ENCODE measurements at regions of chr17 and their contacts with region 1.

Region 1: DNA sequence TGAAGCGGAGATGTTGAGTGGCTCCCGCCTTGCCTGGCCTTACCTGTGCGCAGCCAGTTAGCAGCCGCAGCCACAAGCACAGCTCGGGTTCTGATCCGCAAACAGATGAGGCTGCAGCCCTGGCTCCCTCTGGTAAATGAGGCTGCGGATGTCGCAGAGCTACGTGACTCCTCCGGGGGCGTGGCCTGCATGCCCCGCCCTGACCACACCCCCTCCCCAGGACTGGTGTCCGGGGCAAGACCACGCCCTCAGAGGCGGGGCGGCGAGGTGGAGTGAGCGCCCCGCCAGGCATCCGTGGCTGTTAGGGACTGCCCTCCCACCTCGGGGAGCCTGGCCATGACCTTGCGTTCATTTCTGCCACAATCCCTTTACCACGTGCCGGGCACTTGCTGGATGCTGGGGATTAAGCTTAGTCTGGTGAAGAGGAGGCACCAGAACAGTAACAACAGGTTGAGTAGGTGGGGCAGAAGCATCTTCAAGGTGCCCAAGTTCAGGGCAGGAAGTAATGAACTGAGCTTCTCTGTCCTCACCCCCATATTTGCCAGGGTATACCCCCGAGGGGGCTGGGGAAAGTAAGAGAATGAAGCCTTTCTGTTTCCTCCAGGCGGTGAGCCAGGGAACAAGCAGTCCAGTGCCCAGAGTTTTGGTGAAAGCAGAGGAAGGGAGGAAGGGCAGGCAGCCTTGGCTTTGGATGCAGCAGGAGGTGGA is at the start of gene ALDOC:
- DNase-seq: peak; percentile 98
- H3K4me3 Mint-ChIP-seq: peak within 1 kb of the TSS; percentile 76
- H3K27ac Mint-ChIP-seq: peak within 1 kb of the TSS; percentile 87
- H3K4me1 Mint-ChIP-seq: peaks cover 61% of the 10 kb centered on the region
- H3K27me3 Mint-ChIP-seq: no peaks in the 10 kb centered on the region
- total RNA-seq, gene ALDOC: 61.4 to 63.4 TPM

Region 2: DNA sequence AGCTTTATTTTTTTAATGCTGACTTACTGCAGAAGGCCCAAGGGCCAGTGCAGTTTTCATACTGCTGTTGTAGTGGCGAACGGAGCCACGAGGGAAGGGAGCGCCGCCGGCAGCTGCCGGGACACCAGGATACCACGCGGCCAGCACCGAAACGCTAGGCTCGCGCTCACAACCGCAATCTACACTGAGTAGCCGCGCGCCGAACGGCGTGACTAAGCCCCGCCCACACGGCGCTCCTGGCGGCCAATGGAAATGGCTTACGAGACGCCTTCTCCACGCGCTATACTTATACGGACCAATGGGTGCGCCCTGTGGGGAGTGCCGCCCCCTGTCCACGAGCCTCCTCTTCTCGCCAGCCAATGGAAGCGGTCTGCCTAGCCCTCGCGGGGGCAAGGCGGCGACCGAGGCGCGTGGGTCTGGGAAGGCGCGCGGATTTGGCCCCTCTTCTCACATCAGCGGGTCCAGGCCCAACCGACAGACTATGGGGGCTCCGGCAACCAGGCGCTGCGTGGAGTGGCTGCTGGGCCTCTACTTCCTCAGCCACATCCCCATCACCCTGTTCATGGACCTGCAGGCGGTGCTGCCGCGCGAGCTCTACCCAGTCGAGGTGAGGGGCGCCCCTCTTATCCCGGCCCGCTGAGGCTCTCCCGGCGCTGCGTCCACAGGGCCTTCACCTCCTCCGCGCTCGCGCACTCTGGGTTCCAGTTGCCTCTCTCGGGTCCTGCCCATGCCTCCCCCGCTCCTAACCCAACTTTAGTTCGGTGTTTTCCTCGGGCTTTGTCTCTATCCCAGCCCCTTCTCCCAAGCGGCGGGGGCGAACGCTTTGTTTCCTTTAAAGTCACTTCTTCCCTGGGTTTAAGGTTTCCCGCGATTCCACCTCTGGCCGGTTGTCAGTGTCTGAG is 257.9 kb before region 1 on chr17 and contains the start of gene TMEM97:
- CTCF ChIA-PET with region 1: no interaction called
- POLR2A ChIA-PET with region 1: no interaction called
- DNase-seq: peak; percentile 97
- H3K4me3 Mint-ChIP-seq: peak within 1 kb of the TSS; percentile 86
- H3K27ac Mint-ChIP-seq: peak within 1 kb of the TSS; percentile 85
- H3K4me1 Mint-ChIP-seq: peaks cover 38% of the 10 kb centered on the region
- H3K27me3 Mint-ChIP-seq: no peaks in the 10 kb centered on the region
- total RNA-seq, gene TMEM97: 24.4 to 34.8 TPM

Region 3: DNA sequence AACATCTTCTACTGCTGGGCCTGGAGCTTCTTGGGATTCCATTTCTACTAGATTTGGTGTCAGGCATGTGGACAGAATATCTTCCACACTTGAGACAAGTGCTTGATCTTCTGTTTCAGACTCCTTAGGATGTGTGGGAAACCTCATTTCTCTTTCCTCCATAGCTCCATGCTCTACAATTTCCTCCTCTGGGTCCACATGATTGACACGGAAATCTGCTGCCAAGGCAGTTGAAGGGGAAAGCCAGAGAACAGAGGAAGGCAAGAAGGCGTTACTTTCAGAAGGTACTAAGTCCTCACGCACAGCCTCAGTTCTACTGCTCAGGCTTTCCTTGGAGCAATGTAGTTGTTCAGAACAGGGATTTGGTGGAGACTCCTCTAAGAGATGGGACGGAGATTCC is 15.3 kb after region 1 on chr17:
- CTCF ChIA-PET with region 1: interaction called, 12 read pairs
- POLR2A ChIA-PET with region 1: interaction called, 4 read pairs
- DNase-seq: no peak
- H3K4me3 Mint-ChIP-seq: no peak overlapping the region
- H3K27ac Mint-ChIP-seq: no peak overlapping the region
- H3K4me1 Mint-ChIP-seq: peaks cover 7% of the 10 kb centered on the region
- H3K27me3 Mint-ChIP-seq: no peaks in the 10 kb centered on the region